ENCODE measurements at regions of chr5 and their contacts with region 1.

Region 1: GRCh38 chr5:64634997-64635686 is 55.2 kb upstream of the SHISAL2B start:
- DNase-seq: no peak
- ATAC-seq: peak in 1 of 2 donors; percentile 53
- H3K4me3 ChIP-seq: no peak overlapping the region
- H3K27ac ChIP-seq: no peak overlapping the region
- H3K4me1 ChIP-seq: no peaks in the 10 kb centered on the region
- H3K27me3 ChIP-seq: no peaks in the 10 kb centered on the region
- CTCF ChIP-seq: peak; percentile 81

Region 2: DNA sequence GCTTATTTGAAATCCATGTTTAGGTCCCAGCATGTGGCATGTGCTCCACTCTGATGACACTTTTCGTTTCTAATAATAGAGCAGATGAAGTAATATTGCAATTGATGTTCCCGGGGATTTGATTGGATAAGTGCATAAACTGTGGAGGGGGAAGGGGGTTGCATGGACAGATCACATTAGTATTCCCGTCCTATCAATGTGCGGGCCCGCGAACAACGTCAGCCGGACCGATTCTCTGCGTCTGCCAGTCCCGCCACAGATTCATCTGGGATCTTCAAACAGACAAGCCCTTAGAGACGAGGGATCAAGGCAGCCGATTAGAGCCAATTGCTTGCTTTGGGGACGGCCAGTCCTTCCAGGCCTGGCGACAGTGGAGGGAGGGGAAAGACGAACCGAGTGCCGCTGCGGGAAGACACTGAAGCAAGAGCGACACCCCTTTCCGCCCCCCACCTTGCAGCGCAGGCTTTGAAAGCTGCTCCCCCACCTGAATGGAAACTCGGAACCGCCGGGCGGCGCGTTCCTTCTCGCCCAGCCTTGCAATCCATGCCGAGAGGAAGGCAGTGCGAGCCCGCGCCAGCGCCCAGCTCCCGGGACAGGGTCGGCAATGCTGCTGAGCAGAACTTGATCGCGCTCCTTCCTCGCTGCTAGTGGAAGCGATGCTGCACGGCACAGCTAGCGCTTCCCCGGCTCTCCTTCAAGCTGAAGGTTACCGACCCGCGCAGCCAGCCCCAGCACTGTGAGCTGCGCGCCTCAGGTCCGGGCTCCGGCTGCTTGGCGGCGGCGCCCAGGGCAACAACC is 129.2 kb before region 1 on chr5 and contains the start of gene RGS7BP:
- intact Hi-C with region 1: no loop called
- DNase-seq: peak; percentile 46
- ATAC-seq: peak; percentile 81 to 91
- H3K4me3 ChIP-seq: peak within 1 kb of the TSS; percentile 54
- H3K27ac ChIP-seq: no peak within 1 kb of the TSS
- H3K4me1 ChIP-seq: peaks cover 5% of the 10 kb centered on the region
- H3K27me3 ChIP-seq: peaks cover 40% of the 10 kb centered on the region
- CTCF ChIP-seq: no peak
- total RNA-seq, gene RGS7BP: 1.6 TPM

Region 3: DNA sequence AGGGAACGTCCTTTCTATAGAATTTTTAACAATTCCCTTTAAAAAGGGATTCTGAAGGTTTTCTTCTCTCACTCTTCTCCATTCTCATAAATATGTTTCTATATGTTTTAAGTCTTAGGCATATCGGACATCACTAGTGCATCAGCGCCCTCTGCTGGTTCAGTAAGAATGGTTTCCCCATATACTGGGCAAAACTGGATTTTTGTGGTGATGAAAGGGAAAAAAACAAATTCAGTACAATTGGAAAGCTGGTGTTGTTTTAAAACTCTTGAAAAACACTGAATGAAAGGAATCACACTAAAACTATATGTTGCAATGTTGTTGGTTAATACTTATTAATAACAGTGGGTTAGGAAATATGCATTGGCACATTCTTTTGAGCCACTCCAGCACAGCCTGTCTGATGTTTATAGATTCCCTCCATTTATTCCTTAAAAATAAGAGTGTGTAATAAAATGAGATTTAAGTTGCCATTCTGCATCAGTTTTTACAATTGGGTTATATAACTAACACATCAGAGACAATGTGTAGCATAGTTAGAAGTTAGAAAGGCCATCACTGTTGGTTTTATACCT is 149.4 kb after region 1 on chr5:
- intact Hi-C with region 1: loop called (anchors 10 kb)
- DNase-seq: peak; percentile 55
- ATAC-seq: peak; percentile 78 to 83
- H3K4me3 ChIP-seq: no peak overlapping the region
- H3K27ac ChIP-seq: no peak overlapping the region
- H3K4me1 ChIP-seq: no peaks in the 10 kb centered on the region
- H3K27me3 ChIP-seq: no peaks in the 10 kb centered on the region
- CTCF ChIP-seq: peak; percentile 81

Measured in lower lobe of right lung (tissue), 2 donors.